Activated CD4-positive, alpha-beta memory T cell treated with anti-CD3 and anti-CD28 coated beads, Interleukin-2, amount 10 ng/mL, durations not matched to agents 7 days and 5 days (primary cell): ENCODE measurements at regions of chr9 and their contacts with region 1.

Region 1: GRCh38 chr9:127396808-127397497 is at the start of gene SLC2A8:
- DNase-seq: peak; percentile 98
- H3K4me3 Mint-ChIP-seq: peak within 1 kb of the TSS; percentile 67
- H3K27ac Mint-ChIP-seq: no peak within 1 kb of the TSS
- H3K4me1 Mint-ChIP-seq: peaks cover 18% of the 10 kb centered on the region
- H3K27me3 Mint-ChIP-seq: peaks cover 37% of the 10 kb centered on the region
- total RNA-seq, gene SLC2A8: 7.5 to 7.7 TPM

Region 2: DNA sequence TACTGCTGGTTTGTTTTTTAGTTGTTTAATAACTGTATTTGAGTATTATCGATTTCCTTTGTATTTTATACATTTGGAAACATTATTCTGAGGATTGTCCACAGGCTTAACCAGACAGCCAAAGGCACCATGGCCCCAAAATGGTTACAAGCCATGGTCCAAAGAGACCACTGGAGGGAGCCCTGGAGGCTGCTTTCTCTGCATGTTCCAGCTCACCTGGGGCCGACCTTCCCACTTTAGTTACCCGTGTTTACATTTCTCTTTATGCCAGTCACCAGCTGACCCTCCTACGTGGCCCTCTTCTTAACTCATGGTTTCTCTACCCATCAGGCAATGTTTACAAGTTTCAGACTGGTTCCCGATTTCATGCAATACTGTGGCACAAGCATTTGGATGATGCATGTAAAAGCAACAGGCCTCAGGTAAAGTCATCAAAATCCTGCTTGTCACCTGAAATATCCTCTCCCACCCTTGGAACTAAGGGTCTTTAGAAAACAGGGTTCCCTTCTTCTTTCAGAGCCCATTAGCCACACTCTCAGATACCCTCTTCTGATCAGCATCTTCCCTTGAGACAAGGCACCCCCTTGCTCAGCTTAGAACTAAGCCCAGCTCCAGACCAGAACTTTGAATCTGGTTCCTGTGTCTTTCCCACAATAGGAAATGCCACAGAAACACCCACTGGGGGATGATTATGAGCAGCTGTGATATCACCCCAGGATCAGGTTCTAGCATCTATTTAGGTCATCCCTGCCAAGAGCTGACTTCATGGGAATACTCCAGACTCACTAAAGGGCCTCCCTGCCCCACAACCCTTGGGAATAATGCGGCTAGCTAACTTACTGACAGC is 182.3 kb before region 1 on chr9:
- CTCF ChIA-PET with region 1: interaction called, 15 read pairs
- POLR2A ChIA-PET with region 1: no interaction called
- DNase-seq: peak; percentile 67
- H3K4me3 Mint-ChIP-seq: no peak overlapping the region
- H3K27ac Mint-ChIP-seq: no peak overlapping the region
- H3K4me1 Mint-ChIP-seq: no peaks in the 10 kb centered on the region
- H3K27me3 Mint-ChIP-seq: no peaks in the 10 kb centered on the region

Region 3: GRCh38 chr9:127224178-127224882 is 172.6 kb before region 1 on chr9:
- CTCF ChIA-PET with region 1: interaction called, 14 read pairs
- POLR2A ChIA-PET with region 1: interaction called, 4 read pairs
- DNase-seq: peak; percentile 86
- H3K4me3 Mint-ChIP-seq: peak overlapping the region; percentile 81
- H3K27ac Mint-ChIP-seq: peak overlapping the region; percentile 76
- H3K4me1 Mint-ChIP-seq: peaks cover 31% of the 10 kb centered on the region
- H3K27me3 Mint-ChIP-seq: peaks cover 45% of the 10 kb centered on the region

Region 4: GRCh38 chr9:127423934-127424675 is 27.2 kb after region 1 on chr9 and contains the start of gene ZNF79:
- CTCF ChIA-PET with region 1: interaction called, 11 read pairs
- POLR2A ChIA-PET with region 1: interaction called, 14 read pairs
- DNase-seq: peak; percentile 93
- H3K4me3 Mint-ChIP-seq: peak within 1 kb of the TSS; percentile 93
- H3K27ac Mint-ChIP-seq: peak within 1 kb of the TSS; percentile 91
- H3K4me1 Mint-ChIP-seq: peaks cover 52% of the 10 kb centered on the region
- H3K27me3 Mint-ChIP-seq: no peaks in the 10 kb centered on the region
- total RNA-seq, gene ZNF79: 12.5 to 12.7 TPM

Region 5: DNA sequence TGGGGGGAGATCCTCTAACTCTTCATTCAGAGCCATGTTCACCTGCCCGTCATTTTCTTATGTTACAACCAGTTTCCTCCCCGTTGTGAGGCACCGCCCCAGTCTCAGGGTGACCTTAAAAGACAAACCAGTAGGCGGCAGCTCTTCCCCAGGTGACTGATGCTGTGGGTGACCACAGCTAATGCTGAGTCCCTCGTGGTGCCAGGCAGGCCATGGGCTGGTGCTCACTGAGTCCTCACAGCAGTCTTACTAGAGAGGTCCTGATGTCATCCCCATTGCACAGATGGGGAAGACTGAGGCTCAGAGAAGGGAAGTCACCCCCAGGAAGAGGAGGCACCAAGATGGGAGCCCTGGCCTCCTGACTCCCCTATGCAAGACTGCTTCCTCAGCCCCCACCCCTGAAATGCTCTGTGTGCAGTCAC is 310.8 kb after region 1 on chr9:
- CTCF ChIA-PET with region 1: no interaction called
- POLR2A ChIA-PET with region 1: no interaction called
- DNase-seq: peak; percentile 73
- H3K4me3 Mint-ChIP-seq: no peak overlapping the region
- H3K27ac Mint-ChIP-seq: peak overlapping the region; percentile 24
- H3K4me1 Mint-ChIP-seq: peaks cover 27% of the 10 kb centered on the region
- H3K27me3 Mint-ChIP-seq: no peaks in the 10 kb centered on the region